Activated CD8-positive, alpha-beta memory T cell treated with anti-CD3 and anti-CD28 coated beads, Interleukin-2, amount 10 ng/mL, durations not matched to agents 7 days and 5 days (primary cell): ENCODE measurements at regions of chr16 and their contacts with region 1.

Region 1: DNA sequence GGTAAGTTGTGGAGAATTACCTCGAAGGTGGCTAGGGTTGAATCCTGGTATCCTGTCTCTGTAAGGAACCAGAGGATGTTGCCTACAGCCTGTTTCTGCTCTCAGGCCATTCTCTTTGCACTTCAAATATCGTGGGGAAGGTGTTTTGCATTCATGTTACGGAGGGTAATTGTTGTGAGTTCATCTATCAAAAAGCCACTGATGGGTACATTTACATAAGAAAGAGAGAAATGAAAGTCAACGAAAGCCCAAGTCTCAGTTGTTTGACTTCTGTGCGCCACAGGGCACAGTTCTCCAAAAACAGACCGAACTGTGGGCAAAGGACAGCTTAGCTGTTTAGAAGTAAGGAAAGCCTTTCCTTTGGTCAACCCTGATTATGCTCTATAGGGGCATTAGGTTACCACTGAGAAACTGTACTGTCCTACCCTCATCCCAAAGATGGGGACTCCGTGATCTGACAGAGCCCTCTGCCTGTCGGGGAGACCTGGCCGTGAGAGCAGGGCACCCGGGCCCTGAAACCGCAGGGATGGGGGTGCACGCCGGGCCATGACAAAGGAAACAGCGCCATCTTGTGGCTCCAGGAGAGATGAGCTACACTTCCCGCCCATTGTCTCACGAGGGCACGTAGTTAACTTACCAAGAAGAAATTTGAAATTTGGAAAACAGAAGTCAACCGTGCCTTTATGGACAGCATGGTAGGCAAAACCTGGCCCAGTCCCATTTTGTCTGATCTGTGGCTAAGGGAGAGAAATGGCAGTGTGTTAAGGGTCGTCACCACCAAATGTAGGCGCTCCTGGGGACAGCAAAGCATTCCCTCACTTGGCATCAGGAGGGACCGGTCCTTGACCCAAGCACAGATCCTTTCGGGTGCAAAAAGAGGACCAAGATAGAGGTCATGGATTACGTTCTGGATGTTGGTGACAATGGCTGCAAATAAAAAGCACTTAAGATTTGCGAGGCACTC is 74.5 kb upstream of the DYNLRB2 start:
- DNase-seq: peak; percentile 74
- ATAC-seq: peak; percentile 80
- H3K4me3 Mint-ChIP-seq: no peak overlapping the region
- H3K27ac Mint-ChIP-seq: no peak overlapping the region
- H3K4me1 Mint-ChIP-seq: no peaks in the 10 kb centered on the region
- H3K27me3 Mint-ChIP-seq: peaks cover 27% of the 10 kb centered on the region

Region 2: DNA sequence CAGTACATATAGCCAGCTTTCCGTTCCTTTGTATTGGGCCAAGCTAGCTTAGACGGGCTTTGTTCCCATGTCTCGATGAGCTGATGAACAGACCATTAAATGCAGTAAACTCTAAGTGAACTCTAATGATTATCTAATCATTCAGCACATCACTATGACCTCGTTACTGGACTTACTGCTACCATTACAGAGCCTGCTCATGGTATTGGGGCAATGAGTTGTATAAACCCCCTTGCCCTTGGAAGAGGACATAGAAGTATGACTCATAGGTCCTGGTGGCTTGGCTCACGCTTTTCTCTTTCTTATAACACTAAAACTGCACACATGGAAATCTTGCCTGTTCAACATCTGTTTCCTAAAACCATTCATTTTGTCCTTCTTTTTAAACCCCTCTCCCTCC is 19.1 kb before region 1 on chr16:
- CTCF ChIA-PET with region 1: interaction called, 13 read pairs
- DNase-seq: no peak
- ATAC-seq: no peak
- H3K4me3 Mint-ChIP-seq: no peak overlapping the region
- H3K27ac Mint-ChIP-seq: no peak overlapping the region
- H3K4me1 Mint-ChIP-seq: no peaks in the 10 kb centered on the region
- H3K27me3 Mint-ChIP-seq: peaks cover 10% of the 10 kb centered on the region

Region 3: GRCh38 chr16:80507538-80507937 is 41.2 kb after region 1 on chr16:
- CTCF ChIA-PET with region 1: no interaction called
- DNase-seq: no peak
- ATAC-seq: no peak
- H3K4me3 Mint-ChIP-seq: no peak overlapping the region
- H3K27ac Mint-ChIP-seq: no peak overlapping the region
- H3K4me1 Mint-ChIP-seq: no peaks in the 10 kb centered on the region
- H3K27me3 Mint-ChIP-seq: peaks cover 21% of the 10 kb centered on the region

Region 4: GRCh38 chr16:80751190-80751589 is 284.9 kb after region 1 on chr16:
- CTCF ChIA-PET with region 1: no interaction called
- DNase-seq: no peak
- ATAC-seq: no peak
- H3K4me3 Mint-ChIP-seq: no peak overlapping the region
- H3K27ac Mint-ChIP-seq: no peak overlapping the region
- H3K4me1 Mint-ChIP-seq: peaks cover 36% of the 10 kb centered on the region
- H3K27me3 Mint-ChIP-seq: no peaks in the 10 kb centered on the region